Activated CD4-positive, alpha-beta T cell treated with anti-CD3 and anti-CD28 coated beads for 36 hours (primary cell): ENCODE measurements at regions of chr3 and their contacts with region 1.

Region 1: GRCh38 chr3:124928333-124929202 is 6.0 kb downstream of the MUC13 start:
- DNase-seq: peak; percentile 79
- ATAC-seq: no peak
- H3K4me3 Mint-ChIP-seq: no peak overlapping the region
- H3K27ac Mint-ChIP-seq: no peak overlapping the region
- H3K4me1 Mint-ChIP-seq: no peaks in the 10 kb centered on the region
- H3K27me3 Mint-ChIP-seq: peaks cover 8% of the 10 kb centered on the region

Region 2: GRCh38 chr3:125150525-125151441 is 222.2 kb after region 1 on chr3:
- CTCF ChIA-PET with region 1: interaction called, 4 read pairs
- POLR2A ChIA-PET with region 1: no interaction called
- intact Hi-C with region 1: loop called in 1 of 2 experiments (anchors 5 kb)
- DNase-seq: peak; percentile 81
- ATAC-seq: peak; percentile 95
- H3K4me3 Mint-ChIP-seq: no peak overlapping the region
- H3K27ac Mint-ChIP-seq: no peak overlapping the region
- H3K4me1 Mint-ChIP-seq: peaks cover 8% of the 10 kb centered on the region
- H3K27me3 Mint-ChIP-seq: peaks cover 13% of the 10 kb centered on the region

Region 3: DNA sequence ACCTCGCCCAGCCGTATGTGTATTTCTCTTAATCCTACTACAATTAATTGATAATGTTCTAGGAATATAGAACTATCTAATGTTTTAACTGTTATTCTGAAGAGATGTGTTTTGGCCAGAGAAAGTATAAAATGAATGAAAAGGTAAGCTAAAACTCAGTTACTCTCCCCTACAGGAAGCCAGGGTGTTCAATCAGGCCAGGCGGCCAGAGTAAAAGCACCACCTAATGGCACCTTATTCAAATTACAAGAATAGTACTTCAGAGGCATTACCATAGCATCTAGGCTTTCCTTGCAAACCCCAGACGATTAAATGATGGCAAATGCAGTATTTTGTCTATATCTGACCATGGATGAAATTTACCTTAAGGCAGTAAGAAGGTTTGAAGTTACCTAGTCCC is 273.6 kb after region 1 on chr3:
- CTCF ChIA-PET with region 1: no interaction called
- POLR2A ChIA-PET with region 1: no interaction called
- intact Hi-C with region 1: loop called in 1 of 2 experiments (anchors 2 kb)
- DNase-seq: peak; percentile 35
- ATAC-seq: peak; percentile 74
- H3K4me3 Mint-ChIP-seq: no peak overlapping the region
- H3K27ac Mint-ChIP-seq: no peak overlapping the region
- H3K4me1 Mint-ChIP-seq: no peaks in the 10 kb centered on the region
- H3K27me3 Mint-ChIP-seq: peaks cover 9% of the 10 kb centered on the region